H1 (cell line): ENCODE measurements at regions of chr16 and their contacts with region 1.

Region 1: DNA sequence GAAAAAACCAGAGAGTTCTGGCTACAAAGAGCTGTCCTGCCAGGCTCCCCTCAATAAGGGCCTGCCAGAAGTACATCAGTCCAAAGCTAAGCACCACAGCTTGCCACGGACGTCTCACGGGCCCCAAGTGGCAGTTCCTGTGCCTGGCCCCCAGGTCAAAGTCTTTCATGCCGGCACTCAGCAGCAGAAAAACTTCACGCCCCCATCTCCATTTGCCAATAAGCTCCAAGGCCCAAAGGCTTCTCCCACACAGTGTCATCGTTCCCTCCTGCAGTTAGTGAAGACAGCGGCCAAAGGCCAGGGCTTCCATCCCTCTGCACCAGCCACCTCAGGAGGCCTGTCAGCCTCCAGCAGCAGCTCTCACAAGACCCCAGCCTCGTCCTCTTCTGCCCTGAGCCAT is 27.4 kb downstream of the UBN1 start:
- DNase-seq: no peak
- H3K4me3 ChIP-seq: no peak overlapping the region
- H3K27ac ChIP-seq: no peak overlapping the region
- H3K4me1 ChIP-seq: no peaks in the 10 kb centered on the region
- H3K27me3 ChIP-seq: no peaks in the 10 kb centered on the region
- CTCF ChIP-seq: no peak
- EP300 ChIP-seq: no peak
- POLR2A ChIP-seq: no peak
- RAD21 ChIP-seq: no peak

Region 2: DNA sequence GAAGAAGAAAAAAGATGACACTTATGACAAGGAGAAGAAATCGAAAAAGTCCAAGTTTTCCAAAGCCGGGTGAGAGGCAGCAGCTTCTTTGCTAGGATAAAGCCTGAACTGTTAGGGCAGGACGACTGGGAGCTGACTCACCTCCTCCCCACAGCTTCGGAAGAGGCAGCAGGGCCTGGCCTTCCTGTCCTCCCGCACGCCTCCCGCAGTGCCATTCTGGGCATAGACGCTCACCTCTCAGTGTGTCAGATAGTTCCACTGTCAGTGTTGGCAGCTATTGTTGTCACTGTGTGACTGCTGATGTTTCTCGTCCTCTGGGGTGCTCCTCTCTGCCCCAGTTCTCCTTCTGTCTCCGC is 14.8 kb before region 1 on chr16:
- CTCF ChIA-PET with region 1: interaction called, 3 read pairs
- POLR2A ChIA-PET with region 1: interaction called, 13 read pairs
- DNase-seq: no peak
- H3K4me3 ChIP-seq: no peak overlapping the region
- H3K27ac ChIP-seq: no peak overlapping the region
- H3K4me1 ChIP-seq: no peaks in the 10 kb centered on the region
- H3K27me3 ChIP-seq: no peaks in the 10 kb centered on the region
- CTCF ChIP-seq: no peak
- EP300 ChIP-seq: no peak
- POLR2A ChIP-seq: no peak
- RAD21 ChIP-seq: no peak